ENCODE measurements at regions of chr6 and their contacts with region 1.

Region 1: GRCh38 chr6:70686548-70687133 is 19.0 kb downstream of the SMAP1 start:
- DNase-seq: no peak
- ATAC-seq: peak; percentile 75
- H3K4me3 ChIP-seq: no peak overlapping the region
- H3K27ac ChIP-seq: no peak overlapping the region
- H3K4me1 ChIP-seq: no peaks in the 10 kb centered on the region
- H3K27me3 ChIP-seq: no peaks in the 10 kb centered on the region
- CTCF ChIP-seq: peak; percentile 33 to 66 (median 60); a peak in 5 of 6 replicates
- EP300 ChIP-seq: no peak
- POLR2A ChIP-seq: no peak
- RAD21 ChIP-seq: peak; percentile 63

Region 2: GRCh38 chr6:70150521-70150920 is 536.1 kb before region 1 on chr6:
- CTCF ChIA-PET with region 1: no interaction called
- POLR2A ChIA-PET with region 1: no interaction called
- RAD21 ChIA-PET with region 1: no interaction called
- SMC1A ChIA-PET with region 1: no interaction called
- in situ Hi-C with region 1: no loop called
- intact Hi-C with region 1: no loop called
- DNase-seq: no peak
- ATAC-seq: no peak
- H3K4me3 ChIP-seq: no peak overlapping the region
- H3K27ac ChIP-seq: no peak overlapping the region
- H3K4me1 ChIP-seq: no peaks in the 10 kb centered on the region
- H3K27me3 ChIP-seq: no peaks in the 10 kb centered on the region
- CTCF ChIP-seq: no peak
- EP300 ChIP-seq: no peak
- POLR2A ChIP-seq: no peak
- RAD21 ChIP-seq: no peak

Region 3: GRCh38 chr6:70310063-70310694 is 376.5 kb before region 1 on chr6:
- CTCF ChIA-PET with region 1: interaction called, 43 read pairs
- POLR2A ChIA-PET with region 1: no interaction called
- RAD21 ChIA-PET with region 1: interaction called, 7 read pairs
- SMC1A ChIA-PET with region 1: interaction called, 12 read pairs
- in situ Hi-C with region 1: no loop called
- intact Hi-C with region 1: loop called (anchors 5 kb)
- DNase-seq: no peak
- ATAC-seq: peak; percentile 56; the same call in 2 of the 3 replicates
- H3K4me3 ChIP-seq: no peak overlapping the region
- H3K27ac ChIP-seq: no peak overlapping the region
- H3K4me1 ChIP-seq: 0 out of 2 replicates have a peak, but pooled peaks cover 3% of the 10 kb centered on the region
- H3K27me3 ChIP-seq: no peaks in the 10 kb centered on the region
- CTCF ChIP-seq: peak; percentile 39 to 69 (median 48); a peak in 5 of 6 replicates
- EP300 ChIP-seq: no peak
- POLR2A ChIP-seq: no peak
- RAD21 ChIP-seq: peak; percentile 76

Region 4: GRCh38 chr6:70520575-70520974 is 166.1 kb before region 1 on chr6:
- CTCF ChIA-PET with region 1: interaction called, 163 read pairs
- POLR2A ChIA-PET with region 1: interaction called, 3 read pairs
- RAD21 ChIA-PET with region 1: interaction called, 118 read pairs
- SMC1A ChIA-PET with region 1: interaction called, 94 read pairs
- in situ Hi-C with region 1: no loop called
- intact Hi-C with region 1: loop called (anchors 1 kb)
- DNase-seq: no peak
- ATAC-seq: peak; percentile 65
- H3K4me3 ChIP-seq: no peak overlapping the region
- H3K27ac ChIP-seq: no peak overlapping the region
- H3K4me1 ChIP-seq: no peaks in the 10 kb centered on the region
- H3K27me3 ChIP-seq: no peaks in the 10 kb centered on the region
- CTCF ChIP-seq: peak; percentile 30 to 61 (median 34); a peak in 4 of 6 replicates
- EP300 ChIP-seq: no peak
- POLR2A ChIP-seq: no peak
- RAD21 ChIP-seq: peak; percentile 85

Region 5: GRCh38 chr6:70566751-70567382 is 119.8 kb before region 1 on chr6 and contains the start of gene SDHAF4:
- CTCF ChIA-PET with region 1: interaction called, 12 read pairs
- POLR2A ChIA-PET with region 1: no interaction called
- RAD21 ChIA-PET with region 1: interaction called, 3 read pairs
- SMC1A ChIA-PET with region 1: interaction called, 7 read pairs
- in situ Hi-C with region 1: no loop called
- intact Hi-C with region 1: no loop called
- DNase-seq: peak; percentile 63
- ATAC-seq: peak; percentile 99
- H3K4me3 ChIP-seq: peak within 1 kb of the TSS; percentile 76
- H3K27ac ChIP-seq: peak within 1 kb of the TSS; percentile 87
- H3K4me1 ChIP-seq: peaks cover 4% of the 10 kb centered on the region; the same call in 1 of the 2 replicates
- H3K27me3 ChIP-seq: no peaks in the 10 kb centered on the region
- CTCF ChIP-seq: peak in 2 of 3 experiments; percentile 5 to 14; a peak in 1 of 6 replicates
- EP300 ChIP-seq: no peak
- POLR2A ChIP-seq: peak; percentile 99
- RAD21 ChIP-seq: no peak
- polyA plus RNA-seq, gene SDHAF4: 14.8 to 19.1 TPM

Region 6: GRCh38 chr6:70700922-70701876 is 14.6 kb after region 1 on chr6:
- CTCF ChIA-PET with region 1: interaction called, 29 read pairs
- POLR2A ChIA-PET with region 1: no interaction called
- RAD21 ChIA-PET with region 1: interaction called, 3 read pairs
- SMC1A ChIA-PET with region 1: interaction called, 4 read pairs
- in situ Hi-C with region 1: no loop called
- intact Hi-C with region 1: no loop called
- DNase-seq: no peak
- ATAC-seq: no peak
- H3K4me3 ChIP-seq: no peak overlapping the region
- H3K27ac ChIP-seq: no peak overlapping the region
- H3K4me1 ChIP-seq: no peaks in the 10 kb centered on the region
- H3K27me3 ChIP-seq: no peaks in the 10 kb centered on the region
- CTCF ChIP-seq: no peak
- EP300 ChIP-seq: no peak
- POLR2A ChIP-seq: no peak
- RAD21 ChIP-seq: no peak

Region 7: DNA sequence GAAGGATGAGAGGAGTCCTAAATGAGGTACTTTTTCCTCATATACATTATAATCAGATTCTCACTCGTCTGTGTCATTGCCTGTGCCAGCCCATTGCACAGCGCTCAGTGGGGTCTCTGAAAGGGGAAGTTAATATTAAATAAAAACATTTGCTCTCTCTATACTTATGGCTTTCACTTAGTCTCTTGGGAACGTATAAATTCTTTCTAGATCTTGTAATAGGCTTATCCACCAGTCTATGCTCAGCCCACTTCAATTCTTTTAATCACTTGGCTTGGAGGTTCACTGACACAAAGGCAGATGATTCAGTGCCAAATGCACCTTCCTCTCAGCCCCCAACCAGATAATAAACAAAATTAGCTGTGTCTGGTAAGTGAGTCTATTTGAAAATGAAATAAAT is 437.7 kb after region 1 on chr6:
- CTCF ChIA-PET with region 1: no interaction called
- POLR2A ChIA-PET with region 1: no interaction called
- RAD21 ChIA-PET with region 1: no interaction called
- SMC1A ChIA-PET with region 1: no interaction called
- in situ Hi-C with region 1: no loop called
- intact Hi-C with region 1: no loop called
- DNase-seq: no peak
- ATAC-seq: no peak
- H3K4me3 ChIP-seq: no peak overlapping the region
- H3K27ac ChIP-seq: no peak overlapping the region
- H3K4me1 ChIP-seq: no peaks in the 10 kb centered on the region
- H3K27me3 ChIP-seq: no peaks in the 10 kb centered on the region
- CTCF ChIP-seq: no peak
- EP300 ChIP-seq: no peak
- POLR2A ChIP-seq: no peak
- RAD21 ChIP-seq: no peak

Measured in GM12878 (cell line).